Adrenal gland (tissue), 19 donors: ENCODE measurements at regions of chr20 and their contacts with region 1.

Region 1: DNA sequence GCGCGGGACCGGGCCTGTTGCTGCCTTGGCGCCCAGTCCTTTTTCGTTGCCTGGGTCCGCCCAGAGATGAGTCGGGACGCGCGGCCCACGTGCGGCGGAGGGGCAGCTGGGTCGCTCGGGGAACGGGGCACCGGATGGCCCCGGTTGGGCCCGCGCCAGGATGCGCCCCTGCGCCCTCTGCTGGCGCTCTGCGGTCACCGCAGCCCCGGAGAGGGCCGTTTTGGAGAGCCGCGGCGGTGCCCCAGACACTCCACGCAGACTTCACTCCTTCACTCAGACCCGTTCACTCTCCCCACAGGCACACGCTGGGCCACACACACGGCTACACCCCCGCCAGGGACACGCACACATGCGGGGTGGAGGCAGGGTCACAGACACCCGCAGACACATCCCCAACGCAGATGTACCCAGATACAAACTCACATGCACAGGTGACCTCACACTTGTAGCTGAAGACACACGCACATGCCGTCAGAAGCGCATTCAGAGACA is 38.8 kb downstream of the SRC start:
- DNase-seq: peak; percentile 77 to 86 (median 80)
- H3K4me3 ChIP-seq: peak overlapping the region in 2 of 4 donors; percentile 32 to 68
- H3K27ac ChIP-seq: peak overlapping the region in 3 of 5 donors; percentile 67 to 87 (median 87)
- H3K4me1 ChIP-seq: peaks cover 13 to 49% of the 10 kb centered on the region in 2 donors
- H3K27me3 ChIP-seq: no peaks in the 10 kb centered on the region
- CTCF ChIP-seq: peak; percentile 74 to 98 (median 91)
- POLR2A ChIP-seq: no peak

Region 2: DNA sequence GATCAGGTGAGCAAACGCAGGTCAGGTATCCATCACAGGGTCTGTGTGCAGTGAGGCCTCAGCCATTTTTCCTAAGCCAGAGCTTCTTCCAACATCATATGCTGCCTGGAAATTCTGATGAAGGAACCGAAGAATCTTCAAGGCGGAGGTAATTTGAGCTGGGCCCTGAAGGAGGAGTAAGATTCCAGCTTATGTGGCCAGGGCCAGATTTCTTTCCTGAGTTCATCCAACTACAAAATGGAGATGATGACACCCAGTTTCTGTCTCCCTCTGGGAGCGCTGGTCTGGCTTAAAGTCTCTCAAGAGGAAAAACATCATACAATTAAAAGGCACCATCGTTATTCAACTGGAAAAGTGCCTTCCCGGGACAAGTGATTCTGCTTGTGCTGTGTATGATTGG is 102.2 kb before region 1 on chr20:
- intact Hi-C with region 1: loop called (anchors 5 kb)
- DNase-seq: peak in 1 of 7 donors; percentile 21
- H3K4me3 ChIP-seq: no peak overlapping the region
- H3K27ac ChIP-seq: no peak overlapping the region
- H3K4me1 ChIP-seq: peaks cover 2 to 3% of the 10 kb centered on the region in 2 donors
- H3K27me3 ChIP-seq: no peaks in the 10 kb centered on the region
- CTCF ChIP-seq: peak in 5 of 6 experiments; percentile 3 to 44 (median 30)
- POLR2A ChIP-seq: no peak

Region 3: DNA sequence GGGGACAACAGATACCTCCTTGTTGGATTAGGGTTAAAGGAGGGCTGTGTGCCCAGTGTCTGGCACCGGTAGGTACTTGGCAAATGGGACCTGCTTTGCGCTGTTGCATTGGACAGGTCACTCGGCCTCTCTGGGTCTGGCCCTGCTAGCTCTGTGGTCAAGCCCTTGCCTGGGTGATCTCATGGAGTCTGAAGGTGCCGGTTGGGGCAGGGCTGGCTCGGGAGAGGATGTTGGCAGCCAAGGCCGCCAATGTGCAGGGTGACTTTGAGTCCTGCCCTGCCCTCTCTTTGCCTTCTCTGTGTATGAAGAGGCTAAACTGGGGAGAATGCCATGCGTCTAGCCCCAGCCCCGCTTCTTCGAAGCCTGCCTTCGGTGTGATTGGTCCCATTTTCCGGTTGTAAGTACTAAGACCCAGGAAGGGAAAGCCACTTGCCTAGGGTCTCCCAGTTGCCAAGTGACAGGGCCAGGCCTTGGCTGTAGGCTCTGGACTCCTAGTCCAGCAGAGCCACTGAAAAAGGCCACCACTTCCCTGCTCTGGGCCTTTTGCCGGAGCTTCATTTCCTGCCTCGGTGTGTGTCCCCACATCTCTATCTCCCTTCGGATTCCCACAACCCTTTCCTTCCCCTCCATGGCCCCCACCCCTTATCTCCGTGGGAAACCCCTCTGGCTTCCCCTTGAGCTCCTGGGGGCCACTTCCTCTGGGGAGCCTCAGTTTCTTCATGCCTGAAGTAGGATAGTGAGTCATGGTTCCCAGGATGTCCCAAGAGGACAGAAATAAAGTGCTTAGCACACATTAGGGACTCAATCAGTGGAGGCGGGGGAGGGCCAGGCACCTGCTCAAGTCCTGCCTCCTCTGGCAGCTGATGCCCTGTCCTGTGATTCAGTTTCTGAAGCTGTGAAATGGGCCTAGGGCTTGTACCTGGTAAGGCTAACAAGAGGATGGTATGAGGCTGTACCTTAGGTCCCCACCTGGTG is 34.9 kb before region 1 on chr20:
- intact Hi-C with region 1: loop called in 1 of 2 experiments (anchors 5 kb)
- DNase-seq: peak; percentile 65 to 88 (median 83)
- H3K4me3 ChIP-seq: no peak overlapping the region
- H3K27ac ChIP-seq: peak overlapping the region in 4 of 5 donors; percentile 9 to 88 (median 78)
- H3K4me1 ChIP-seq: peaks cover 30 to 73% of the 10 kb centered on the region in 2 donors
- H3K27me3 ChIP-seq: no peaks in the 10 kb centered on the region
- CTCF ChIP-seq: no peak
- POLR2A ChIP-seq: no peak

Region 4: GRCh38 chr20:37417617-37418467 is 33.1 kb after region 1 on chr20:
- intact Hi-C with region 1: no loop called
- DNase-seq: no peak
- H3K4me3 ChIP-seq: no peak overlapping the region
- H3K27ac ChIP-seq: no peak overlapping the region
- H3K4me1 ChIP-seq: no peaks in the 10 kb centered on the region
- H3K27me3 ChIP-seq: no peaks in the 10 kb centered on the region
- CTCF ChIP-seq: no peak
- POLR2A ChIP-seq: no peak